ENCODE measurements at regions of chr22 and their contacts with region 1.

Region 1: GRCh38 chr22:31211862-31212730 is at the start of gene LIMK2:
- DNase-seq: peak; percentile 99
- ATAC-seq: peak; percentile 95
- total RNA-seq, gene LIMK2: 8.6 TPM

Region 2: GRCh38 chr22:30694171-30694639 is 517.9 kb before region 1 on chr22:
- intact Hi-C with region 1: no loop called
- DNase-seq: peak; percentile 69
- ATAC-seq: peak; percentile 76

Region 3: DNA sequence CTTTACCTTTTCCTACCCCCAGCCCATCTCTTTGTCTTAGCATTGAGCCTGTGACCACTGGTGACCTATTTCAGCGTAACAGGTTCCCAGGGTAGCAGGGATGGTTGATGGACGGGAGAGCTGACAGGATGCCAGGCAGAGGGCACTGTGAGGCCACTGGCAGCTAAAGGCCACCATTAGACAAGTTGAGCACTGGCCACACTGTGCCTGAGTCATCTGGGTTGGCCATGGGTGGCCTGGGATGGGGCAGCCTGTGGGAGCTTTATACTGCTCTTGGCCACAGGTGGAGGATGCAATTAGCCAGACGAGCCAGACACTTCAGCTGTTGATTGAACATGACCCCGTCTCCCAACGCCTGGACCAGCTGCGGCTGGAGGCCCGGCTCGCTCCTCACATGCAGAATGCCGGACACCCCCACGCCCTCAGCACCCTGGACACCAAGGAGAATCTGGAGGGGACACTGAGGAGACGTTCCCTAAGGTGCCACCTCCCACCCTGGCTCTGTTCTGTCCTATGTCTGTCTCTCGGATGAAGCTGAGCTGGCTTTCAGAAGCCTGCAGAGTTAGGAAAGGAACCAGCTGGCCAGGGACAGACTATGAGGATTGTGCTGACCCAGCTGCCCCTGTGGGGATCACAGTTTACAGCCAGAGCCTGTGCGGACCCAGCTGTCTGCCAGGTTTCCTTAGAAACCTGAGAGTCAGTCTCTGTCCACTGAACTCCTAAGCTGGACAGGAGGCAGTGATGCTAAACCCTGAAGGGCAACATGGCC is 50.4 kb after region 1 on chr22:
- intact Hi-C with region 1: no loop called
- DNase-seq: no peak
- ATAC-seq: peak; percentile 15

Region 4: DNA sequence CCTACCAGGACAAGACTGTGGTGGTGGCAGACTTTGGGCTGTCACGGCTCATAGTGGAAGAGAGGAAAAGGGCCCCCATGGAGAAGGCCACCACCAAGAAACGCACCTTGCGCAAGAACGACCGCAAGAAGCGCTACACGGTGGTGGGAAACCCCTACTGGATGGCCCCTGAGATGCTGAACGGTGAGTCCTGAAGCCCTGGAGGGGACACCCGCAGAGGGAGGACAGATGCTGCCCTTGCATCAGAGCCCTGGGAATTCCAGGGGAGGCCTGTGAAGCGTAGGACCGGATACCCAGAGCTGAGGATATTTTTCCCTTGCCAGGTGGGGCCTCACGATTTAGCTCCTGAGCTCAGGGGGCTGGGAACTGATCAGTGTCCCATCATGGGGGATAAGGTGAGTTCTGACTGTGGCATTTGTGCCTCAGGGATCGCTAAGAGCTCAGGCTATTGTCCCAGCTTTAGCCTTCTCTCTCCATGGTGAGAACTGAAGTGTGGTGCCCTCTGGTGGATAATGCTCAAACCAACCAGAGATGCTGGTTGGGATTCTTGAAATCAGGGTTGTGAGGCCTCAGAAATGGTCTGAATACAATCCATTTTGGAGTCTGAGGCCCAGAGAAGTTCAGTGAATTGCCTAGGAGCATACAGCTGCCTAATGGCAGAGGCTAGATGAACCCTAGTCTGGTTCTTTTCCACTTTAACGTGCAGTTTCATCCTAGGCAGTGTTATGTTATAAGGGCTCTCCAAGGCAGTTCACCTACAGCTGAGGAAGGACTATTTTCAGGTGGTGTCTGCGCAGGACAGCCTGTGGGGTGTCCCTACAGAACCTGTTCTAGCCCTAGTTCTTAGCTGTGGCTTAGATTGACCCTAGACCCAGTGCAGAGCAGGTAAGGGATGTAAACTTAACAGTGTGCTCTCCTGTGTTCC is 60.7 kb after region 1 on chr22:
- intact Hi-C with region 1: loop called (anchors 10 kb)
- DNase-seq: no peak
- ATAC-seq: peak; percentile 77